ENCODE measurements at regions of chr9 and their contacts with region 1.

Region 1: DNA sequence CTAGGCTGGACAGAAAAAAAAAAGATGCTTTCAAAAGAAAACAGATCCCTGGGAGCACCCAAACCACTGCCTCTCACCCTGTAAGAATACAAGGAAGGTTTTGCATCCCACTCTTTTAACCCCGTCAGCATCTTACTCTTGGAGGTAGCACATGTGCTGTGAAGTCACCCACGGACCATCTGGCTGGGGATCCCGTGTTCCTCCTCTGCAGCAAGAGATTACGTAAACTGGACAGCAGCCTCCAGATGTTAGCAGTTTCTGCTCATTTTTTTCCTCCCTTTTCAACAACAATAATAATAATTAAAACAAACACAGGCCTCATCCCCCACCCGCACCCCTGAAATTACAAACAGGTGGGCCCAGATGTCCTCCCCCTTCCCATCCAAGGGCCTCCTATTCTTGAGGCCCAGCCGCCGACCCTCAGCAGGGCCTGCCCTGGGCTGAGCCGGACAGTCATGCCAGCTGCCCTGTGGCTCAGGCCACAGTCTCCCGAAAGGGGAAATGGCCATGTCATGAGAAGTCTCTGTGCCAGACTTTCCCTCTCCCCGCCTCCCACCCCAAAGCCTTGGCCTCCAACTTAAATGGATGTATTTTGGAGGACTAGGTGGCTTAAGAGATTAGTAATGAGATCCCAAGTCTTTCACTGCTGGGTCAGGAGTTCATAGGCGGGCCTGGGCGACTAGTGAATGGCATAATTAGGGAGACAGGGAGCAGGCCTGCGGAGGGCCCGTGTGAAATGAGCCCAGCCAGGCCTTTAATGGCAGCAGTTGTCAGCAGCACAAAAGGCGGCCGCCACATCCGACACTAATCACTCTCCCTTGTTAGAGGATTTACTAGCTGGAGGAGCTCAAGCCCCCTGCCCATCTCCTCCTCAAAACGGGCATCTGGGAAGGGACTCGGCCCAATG is 165.1 kb downstream of the PAPPA start:
- DNase-seq: peak; percentile 26
- H3K4me3 ChIP-seq: no peak overlapping the region
- H3K27ac ChIP-seq: peak overlapping the region; percentile 24 to 58 (median 39)
- H3K4me1 ChIP-seq: no peaks in the 10 kb centered on the region
- H3K27me3 ChIP-seq: no peaks in the 10 kb centered on the region
- CTCF ChIP-seq: no peak
- EP300 ChIP-seq: no peak
- POLR2A ChIP-seq: no peak

Region 2: DNA sequence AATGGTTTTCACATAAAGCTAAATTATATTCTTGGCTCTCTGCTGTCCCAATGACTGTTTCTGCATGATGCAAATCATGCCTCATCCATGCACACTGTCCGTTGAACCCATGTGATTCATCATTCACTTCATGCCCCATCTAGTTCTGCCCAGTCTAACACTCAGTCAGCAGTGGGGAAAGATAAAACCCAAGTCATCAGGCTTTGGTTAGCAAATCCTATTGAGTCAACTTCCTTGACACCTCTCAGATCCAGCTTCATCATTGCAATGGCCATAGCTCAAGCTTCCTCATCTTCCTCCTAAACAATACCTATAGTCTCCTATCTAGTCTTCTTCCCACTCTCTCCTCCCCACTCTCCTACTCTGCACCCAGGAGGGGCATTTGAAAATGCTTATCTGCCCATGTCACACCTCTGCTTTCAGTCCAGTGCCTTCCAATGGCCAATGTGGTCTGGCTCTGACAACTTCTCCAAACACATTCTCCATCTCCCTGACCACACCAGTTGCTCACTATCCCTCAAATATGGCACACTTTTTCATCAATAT is 102.3 kb after region 1 on chr9:
- in situ Hi-C with region 1: loop called in 1 of 4 experiments (anchors 25 kb)
- intact Hi-C with region 1: no loop called
- DNase-seq: no peak
- H3K4me3 ChIP-seq: no peak overlapping the region
- H3K27ac ChIP-seq: no peak overlapping the region
- H3K4me1 ChIP-seq: no peaks in the 10 kb centered on the region
- H3K27me3 ChIP-seq: no peaks in the 10 kb centered on the region
- CTCF ChIP-seq: no peak
- EP300 ChIP-seq: no peak
- POLR2A ChIP-seq: no peak

Measured in transverse colon (tissue), 4 donors.